ENCODE measurements at regions of chr4 and their contacts with region 1.

Region 1: DNA sequence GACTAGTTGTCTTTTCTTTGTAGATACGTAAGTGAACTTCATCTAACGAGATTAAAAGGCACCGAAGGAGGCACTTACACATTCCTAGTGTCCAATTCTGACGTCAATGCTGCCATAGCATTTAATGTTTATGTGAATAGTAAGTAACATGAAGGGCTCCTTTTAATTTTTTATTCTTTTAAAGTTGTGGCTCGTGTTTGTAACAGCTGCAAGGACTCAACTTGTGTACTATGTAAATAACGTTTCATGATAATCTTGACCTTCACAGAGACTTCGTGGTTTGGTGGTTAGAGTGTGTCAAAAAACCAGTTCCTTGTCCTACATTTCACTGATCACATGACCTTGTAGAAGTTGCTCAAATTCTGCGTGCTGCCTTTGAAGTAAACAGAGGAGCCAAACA is 51.6 kb downstream of the KIT start:
- DNase-seq: no peak
- H3K4me3 ChIP-seq: no peak overlapping the region
- H3K27ac ChIP-seq: no peak overlapping the region
- H3K4me1 ChIP-seq: no peaks in the 10 kb centered on the region
- H3K27me3 ChIP-seq: no peaks in the 10 kb centered on the region
- CTCF ChIP-seq: no peak
- POLR2A ChIP-seq: no peak

Region 2: DNA sequence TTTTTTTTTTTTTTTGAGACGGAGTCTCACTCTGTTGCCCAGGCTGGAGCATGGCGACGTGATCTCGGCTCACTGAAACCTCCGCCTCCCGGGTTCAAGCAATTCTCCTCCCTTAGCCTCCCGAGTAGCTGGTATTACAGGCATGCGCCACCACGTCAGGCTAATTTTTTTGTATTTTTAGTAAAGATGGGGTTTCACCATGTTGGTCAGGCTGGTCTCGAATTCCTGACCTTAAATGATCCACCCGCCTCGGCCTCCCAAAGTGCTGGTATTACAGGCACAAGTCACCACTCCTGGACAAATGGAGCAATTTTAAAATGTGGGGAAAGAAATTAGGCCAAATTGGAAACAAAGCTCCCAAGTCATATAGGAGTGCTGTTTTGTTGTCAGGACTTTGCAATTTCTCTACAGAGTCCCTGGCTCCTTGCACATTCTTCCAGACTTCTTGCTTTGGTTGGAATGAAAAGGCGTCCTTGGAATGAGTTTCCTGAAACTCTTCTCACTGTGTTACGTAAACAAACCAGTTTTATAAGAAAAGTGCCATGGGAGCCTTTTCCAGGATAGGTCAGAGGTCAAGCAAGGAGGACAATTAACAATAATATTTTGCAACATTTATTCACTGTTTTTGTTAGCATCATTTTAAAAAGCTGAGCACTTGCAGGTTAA is 84.1 kb before region 1 on chr4:
- intact Hi-C with region 1: loop called (anchors 2 kb)
- DNase-seq: no peak
- H3K4me3 ChIP-seq: no peak overlapping the region
- H3K27ac ChIP-seq: peak overlapping the region; percentile 45 to 84
- H3K4me1 ChIP-seq: no peaks in the 10 kb centered on the region
- H3K27me3 ChIP-seq: no peaks in the 10 kb centered on the region
- CTCF ChIP-seq: no peak
- POLR2A ChIP-seq: no peak

Region 3: GRCh38 chr4:54773016-54773415 is 63.6 kb after region 1 on chr4:
- intact Hi-C with region 1: no loop called
- DNase-seq: no peak
- H3K4me3 ChIP-seq: no peak overlapping the region
- H3K27ac ChIP-seq: no peak overlapping the region
- H3K4me1 ChIP-seq: no peaks in the 10 kb centered on the region
- H3K27me3 ChIP-seq: no peaks in the 10 kb centered on the region
- CTCF ChIP-seq: no peak
- POLR2A ChIP-seq: no peak

Measured in breast epithelium (tissue), 4 donors.